WTC11 (cell line): ENCODE measurements at regions of chr2 and their contacts with region 1.

Region 1: DNA sequence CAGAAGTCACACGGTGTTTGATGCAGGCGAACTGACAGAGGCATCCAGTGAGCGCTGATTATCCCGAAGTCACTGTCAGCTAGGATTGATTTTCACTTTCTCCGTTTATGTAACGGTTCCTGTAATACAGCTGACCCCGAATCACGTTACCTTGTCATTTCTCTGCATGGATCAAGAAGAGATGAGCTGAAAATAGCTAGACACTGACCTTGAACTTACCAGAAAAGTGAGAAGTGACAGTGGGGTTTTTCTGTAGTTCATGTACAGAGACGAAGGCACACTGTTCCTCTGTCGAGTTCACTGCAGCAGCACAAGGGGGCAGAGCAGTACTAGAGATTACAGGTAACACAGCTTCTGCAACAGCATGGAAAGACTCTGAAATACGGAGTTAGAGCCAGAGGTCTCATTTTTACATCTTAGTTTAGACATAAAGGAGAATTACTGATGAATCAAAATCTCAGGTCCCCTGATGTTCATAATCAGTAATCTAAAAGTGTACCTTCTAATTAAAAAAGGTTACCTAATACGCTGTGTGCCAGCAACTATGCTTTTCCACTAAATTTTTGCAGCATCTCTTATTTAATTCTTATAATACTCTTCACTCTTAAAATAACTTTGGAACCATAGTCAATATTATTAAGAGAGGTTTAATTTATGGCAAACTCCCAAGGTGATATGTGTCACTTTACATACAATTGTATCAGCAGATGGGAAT is 33.1 kb downstream of the ARHGAP15 start:
- DNase-seq: peak; percentile 40
- ATAC-seq: peak; percentile 99
- H3K4me3 Mint-ChIP-seq: no peak overlapping the region
- H3K27ac Mint-ChIP-seq: no peak overlapping the region
- H3K4me1 Mint-ChIP-seq: no peaks in the 10 kb centered on the region
- H3K27me3 Mint-ChIP-seq: no peaks in the 10 kb centered on the region
- CTCF ChIP-seq: peak; percentile 23; the same call in 1 of the 2 replicates

Region 2: DNA sequence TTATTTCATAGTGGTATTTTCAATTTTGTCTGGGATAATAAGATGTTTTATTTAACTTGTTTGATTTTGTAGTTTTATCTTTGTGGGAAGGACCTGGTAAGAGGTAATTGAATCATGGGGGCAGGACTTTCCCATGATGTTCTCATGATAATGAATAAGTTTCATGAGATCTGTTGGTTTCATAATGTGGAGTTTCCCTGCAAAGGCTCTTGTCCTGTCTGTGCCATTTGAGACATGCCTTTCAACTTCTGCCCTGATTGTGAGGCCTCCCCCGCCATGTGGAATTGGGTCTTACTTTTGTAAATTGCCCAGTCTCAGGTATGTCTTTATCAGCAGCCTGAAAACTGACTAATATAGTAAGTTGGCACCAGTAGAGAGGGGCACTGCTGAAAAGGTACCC is 110.8 kb before region 1 on chr2:
- CTCF ChIA-PET with region 1: no interaction called
- POLR2A ChIA-PET with region 1: no interaction called
- DNase-seq: no peak
- ATAC-seq: no peak
- H3K4me3 Mint-ChIP-seq: no peak overlapping the region
- H3K27ac Mint-ChIP-seq: no peak overlapping the region
- H3K4me1 Mint-ChIP-seq: peaks cover 8% of the 10 kb centered on the region
- H3K27me3 Mint-ChIP-seq: no peaks in the 10 kb centered on the region
- CTCF ChIP-seq: no peak

Region 3: GRCh38 chr2:143110758-143111428 is 51.4 kb before region 1 on chr2:
- CTCF ChIA-PET with region 1: interaction called, 10 read pairs
- POLR2A ChIA-PET with region 1: no interaction called
- DNase-seq: peak; percentile 66
- ATAC-seq: peak; percentile 94
- H3K4me3 Mint-ChIP-seq: no peak overlapping the region
- H3K27ac Mint-ChIP-seq: no peak overlapping the region
- H3K4me1 Mint-ChIP-seq: no peaks in the 10 kb centered on the region
- H3K27me3 Mint-ChIP-seq: no peaks in the 10 kb centered on the region
- CTCF ChIP-seq: peak; percentile 63